Activated CD4-positive, alpha-beta T cell treated with anti-CD3 and anti-CD28 coated beads, Interleukin-2, amount 10 ng/mL, durations not matched to agents 24 days and 14 days (primary cell): ENCODE measurements at regions of chrX and their contacts with region 1.

Region 1: GRCh38 chrX:80578517-80579105 is 158.4 kb downstream of the TENT5D start:
- DNase-seq: no peak
- H3K4me3 Mint-ChIP-seq: no peak overlapping the region
- H3K27ac Mint-ChIP-seq: no peak overlapping the region
- H3K4me1 Mint-ChIP-seq: no peaks in the 10 kb centered on the region
- H3K27me3 Mint-ChIP-seq: no peaks in the 10 kb centered on the region

Region 2: DNA sequence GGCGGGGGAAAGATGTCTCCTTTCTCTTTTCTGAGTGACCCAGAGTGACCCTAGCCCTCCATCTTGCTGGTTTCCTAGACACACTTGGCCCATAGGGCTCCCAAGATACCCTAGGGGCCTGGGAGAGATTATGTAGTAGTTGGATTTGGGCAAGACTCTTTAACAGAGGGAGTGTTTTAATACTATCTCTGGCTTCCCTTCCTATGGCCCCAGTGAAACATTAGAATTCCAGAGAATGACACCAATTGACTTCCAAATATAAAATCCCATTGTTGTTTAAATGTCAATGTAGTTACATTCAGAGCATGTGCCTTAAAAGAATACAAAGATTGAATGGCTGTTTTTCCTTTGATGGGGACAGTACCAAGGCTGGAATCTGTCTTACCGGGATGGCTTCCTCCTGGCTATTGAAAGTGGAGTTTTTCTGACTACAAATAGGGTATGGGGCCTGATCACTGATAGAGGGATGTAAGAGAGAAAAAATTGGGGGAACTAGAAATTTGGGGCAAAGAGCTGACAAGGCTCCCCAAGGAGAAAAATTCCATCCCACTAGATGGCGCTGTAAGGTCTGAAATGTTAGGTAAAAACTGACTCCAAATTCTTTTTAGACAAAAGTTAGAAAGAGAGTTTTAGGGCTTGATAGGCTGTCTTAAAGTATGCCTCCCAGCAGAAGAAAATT is 147.6 kb before region 1 on chrX:
- intact Hi-C with region 1: loop called (anchors 5 kb)
- DNase-seq: peak; percentile 52
- H3K4me3 Mint-ChIP-seq: no peak overlapping the region
- H3K27ac Mint-ChIP-seq: no peak overlapping the region
- H3K4me1 Mint-ChIP-seq: no peaks in the 10 kb centered on the region
- H3K27me3 Mint-ChIP-seq: no peaks in the 10 kb centered on the region

Region 3: GRCh38 chrX:80705379-80705778 is 126.8 kb after region 1 on chrX:
- intact Hi-C with region 1: no loop called
- DNase-seq: no peak
- H3K4me3 Mint-ChIP-seq: no peak overlapping the region
- H3K27ac Mint-ChIP-seq: no peak overlapping the region
- H3K4me1 Mint-ChIP-seq: no peaks in the 10 kb centered on the region
- H3K27me3 Mint-ChIP-seq: no peaks in the 10 kb centered on the region